ENCODE measurements at regions of chr14 and their contacts with region 1.

Region 1: GRCh38 chr14:85535991-85536832 is 6.3 kb downstream of the FLRT2 start:
- DNase-seq: peak; percentile 80
- H3K4me3 ChIP-seq: peak overlapping the region; percentile 12 to 94 (median 93)
- H3K27ac ChIP-seq: peak overlapping the region; percentile 59
- H3K4me1 ChIP-seq: peaks cover 31% of the 10 kb centered on the region
- H3K27me3 ChIP-seq: no peaks in the 10 kb centered on the region
- CTCF ChIP-seq: peak; percentile 17 to 27
- POLR2A ChIP-seq: no peak

Region 2: DNA sequence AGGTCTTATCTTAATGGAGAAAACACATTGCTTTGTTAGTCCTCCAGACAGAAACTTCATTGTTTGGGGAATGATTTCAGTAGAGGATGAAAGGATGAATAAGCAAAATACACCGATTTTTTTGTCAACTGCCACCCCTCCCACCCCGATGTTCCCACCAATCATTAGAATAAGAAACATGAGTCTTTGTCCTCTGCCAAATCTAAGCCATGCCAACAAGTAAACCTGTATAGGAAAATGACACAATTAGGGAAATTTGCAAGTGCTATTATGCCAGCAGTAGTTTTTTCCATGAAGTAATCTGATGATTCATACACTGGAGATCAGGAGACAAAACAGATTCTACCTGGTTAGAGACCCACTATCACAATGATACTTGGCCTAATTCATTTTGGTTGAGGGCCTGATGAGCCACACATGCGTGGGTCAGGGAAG is 29.7 kb after region 1 on chr14:
- CTCF ChIA-PET with region 1: interaction called, 3 read pairs
- POLR2A ChIA-PET with region 1: no interaction called
- dilution Hi-C with region 1: no loop called
- intact Hi-C with region 1: loop called (anchors 1 kb)
- DNase-seq: peak; percentile 89
- H3K4me3 ChIP-seq: no peak overlapping the region
- H3K27ac ChIP-seq: peak overlapping the region; percentile 92
- H3K4me1 ChIP-seq: peaks cover 30% of the 10 kb centered on the region
- H3K27me3 ChIP-seq: no peaks in the 10 kb centered on the region
- CTCF ChIP-seq: no peak
- POLR2A ChIP-seq: peak; percentile 21

Region 3: GRCh38 chr14:85607651-85608081 is 71.5 kb after region 1 on chr14:
- CTCF ChIA-PET with region 1: interaction called, 23 read pairs
- POLR2A ChIA-PET with region 1: no interaction called
- dilution Hi-C with region 1: no loop called
- intact Hi-C with region 1: loop called (anchors 1 kb)
- DNase-seq: peak; percentile 47
- H3K4me3 ChIP-seq: no peak overlapping the region
- H3K27ac ChIP-seq: no peak overlapping the region
- H3K4me1 ChIP-seq: no peaks in the 10 kb centered on the region
- H3K27me3 ChIP-seq: no peaks in the 10 kb centered on the region
- CTCF ChIP-seq: no peak
- POLR2A ChIP-seq: no peak

Region 4: GRCh38 chr14:86057018-86057667 is 520.9 kb after region 1 on chr14:
- CTCF ChIA-PET with region 1: interaction called, 16 read pairs
- POLR2A ChIA-PET with region 1: no interaction called
- dilution Hi-C with region 1: no loop called
- intact Hi-C with region 1: loop called (anchors 1 kb)
- DNase-seq: peak; percentile 36
- H3K4me3 ChIP-seq: no peak overlapping the region
- H3K27ac ChIP-seq: no peak overlapping the region
- H3K4me1 ChIP-seq: no peaks in the 10 kb centered on the region
- H3K27me3 ChIP-seq: no peaks in the 10 kb centered on the region
- CTCF ChIP-seq: peak; percentile 57 to 59
- POLR2A ChIP-seq: no peak